Left ventricle myocardium inferior (tissue), 1 donor: ENCODE measurements at regions of chr4 and their contacts with region 1.

Region 1: GRCh38 chr4:100591161-100591876 is 73.5 kb upstream of the EMCN start:
- DNase-seq: peak; percentile 51
- H3K4me3 ChIP-seq: peak overlapping the region; percentile 10
- H3K27ac ChIP-seq: peak overlapping the region; percentile 53
- H3K4me1 ChIP-seq: peaks cover 28% of the 10 kb centered on the region
- H3K27me3 ChIP-seq: no peaks in the 10 kb centered on the region
- CTCF ChIP-seq: no peak

Region 2: DNA sequence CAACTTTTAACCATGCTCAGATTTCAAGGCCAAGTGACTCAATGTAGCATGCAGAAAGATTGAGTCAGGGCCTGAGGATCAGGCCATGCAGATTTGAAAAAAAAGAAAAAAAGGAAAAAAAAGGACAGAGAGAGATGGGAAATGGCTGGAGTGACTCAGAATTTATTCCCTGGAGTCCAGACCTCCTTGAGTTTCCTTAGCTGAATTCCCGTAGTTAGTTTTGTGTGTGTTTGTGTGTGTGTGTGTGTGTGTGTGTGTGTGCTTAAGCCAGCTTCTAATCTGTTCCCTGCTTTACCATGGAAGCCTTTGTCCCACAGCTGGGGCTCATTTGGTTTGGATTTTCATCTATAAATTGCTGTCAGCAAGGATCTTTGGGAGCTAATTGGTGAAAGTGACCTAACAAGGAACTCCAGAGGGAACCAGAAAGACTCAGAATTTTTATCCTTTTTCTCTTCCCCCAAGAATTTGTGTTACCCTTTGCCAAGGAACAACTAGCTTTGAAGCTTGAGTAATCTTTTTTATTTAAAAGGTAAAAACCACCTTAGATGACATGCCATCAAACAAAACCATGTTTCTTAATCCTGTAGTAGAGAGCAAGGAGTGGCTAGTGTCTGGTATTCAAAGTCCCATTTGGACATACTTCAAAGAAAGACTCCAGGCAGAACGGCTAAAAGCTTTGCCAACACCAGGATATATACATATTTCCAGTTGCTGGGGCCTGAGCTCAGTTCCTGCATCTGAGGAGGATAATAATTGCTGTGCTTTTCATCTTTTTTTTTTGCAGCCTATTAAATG is 292.1 kb before region 1 on chr4:
- intact Hi-C with region 1: no loop called
- DNase-seq: no peak
- H3K4me3 ChIP-seq: no peak overlapping the region
- H3K27ac ChIP-seq: peak overlapping the region; percentile 46
- H3K4me1 ChIP-seq: peaks cover 8% of the 10 kb centered on the region
- H3K27me3 ChIP-seq: no peaks in the 10 kb centered on the region
- CTCF ChIP-seq: no peak

Region 3: DNA sequence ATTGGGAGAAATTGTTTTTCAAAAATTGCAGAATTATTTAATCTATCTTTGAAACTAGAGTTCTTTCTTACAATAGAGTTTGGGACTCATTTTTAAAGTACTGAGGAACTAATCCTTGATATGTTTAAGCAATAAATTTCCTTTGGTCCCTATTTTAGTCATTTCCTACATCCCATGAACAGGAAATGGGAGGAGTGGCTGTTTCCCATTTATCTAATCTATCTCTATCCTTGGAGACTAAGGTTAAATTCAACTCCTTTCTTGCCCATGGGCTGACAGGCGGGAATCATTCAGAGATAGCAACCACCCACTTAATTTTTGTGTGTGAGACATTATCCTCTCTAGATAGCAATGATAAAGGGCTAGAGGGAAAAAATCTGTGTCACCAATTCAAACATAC is 58.1 kb after region 1 on chr4:
- intact Hi-C with region 1: loop called (anchors 10 kb)
- DNase-seq: no peak
- H3K4me3 ChIP-seq: no peak overlapping the region
- H3K27ac ChIP-seq: peak overlapping the region; percentile 31
- H3K4me1 ChIP-seq: peaks cover 27% of the 10 kb centered on the region
- H3K27me3 ChIP-seq: no peaks in the 10 kb centered on the region
- CTCF ChIP-seq: no peak